Activated CD4-positive, alpha-beta T cell treated with anti-CD3 and anti-CD28 coated beads, Interleukin-2, amount 10 ng/mL, durations not matched to agents 24 days and 14 days (primary cell): ENCODE measurements at regions of chr1 and their contacts with region 1.

Region 1: GRCh38 chr1:91555821-91556531 is 55.3 kb downstream of the CDC7 start:
- DNase-seq: peak; percentile 93
- H3K4me3 Mint-ChIP-seq: peak overlapping the region; percentile 61
- H3K27ac Mint-ChIP-seq: peak overlapping the region; percentile 91
- H3K4me1 Mint-ChIP-seq: peaks cover 85% of the 10 kb centered on the region
- H3K27me3 Mint-ChIP-seq: no peaks in the 10 kb centered on the region

Region 2: DNA sequence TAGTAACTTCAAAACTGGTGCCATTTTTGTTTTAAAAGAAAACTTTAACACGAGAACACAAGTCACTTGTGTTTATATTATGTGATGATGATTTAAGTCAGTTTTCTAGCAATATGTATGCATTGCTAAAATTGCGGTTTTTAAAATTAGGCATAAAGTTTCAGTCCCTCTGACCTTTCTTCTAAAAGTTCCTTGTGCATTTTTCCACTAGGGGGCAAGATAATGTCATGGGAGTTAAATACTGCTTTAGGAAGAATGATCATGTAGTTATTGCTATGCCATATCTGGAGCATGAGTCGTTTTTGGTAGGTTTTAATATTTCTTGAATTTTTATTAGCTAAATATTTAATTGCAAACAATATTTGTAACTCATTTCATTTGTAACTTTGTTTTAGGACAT is 44.6 kb before region 1 on chr1:
- intact Hi-C with region 1: no loop called
- DNase-seq: peak; percentile 59
- H3K4me3 Mint-ChIP-seq: no peak overlapping the region
- H3K27ac Mint-ChIP-seq: no peak overlapping the region
- H3K4me1 Mint-ChIP-seq: peaks cover 23% of the 10 kb centered on the region
- H3K27me3 Mint-ChIP-seq: no peaks in the 10 kb centered on the region

Region 3: DNA sequence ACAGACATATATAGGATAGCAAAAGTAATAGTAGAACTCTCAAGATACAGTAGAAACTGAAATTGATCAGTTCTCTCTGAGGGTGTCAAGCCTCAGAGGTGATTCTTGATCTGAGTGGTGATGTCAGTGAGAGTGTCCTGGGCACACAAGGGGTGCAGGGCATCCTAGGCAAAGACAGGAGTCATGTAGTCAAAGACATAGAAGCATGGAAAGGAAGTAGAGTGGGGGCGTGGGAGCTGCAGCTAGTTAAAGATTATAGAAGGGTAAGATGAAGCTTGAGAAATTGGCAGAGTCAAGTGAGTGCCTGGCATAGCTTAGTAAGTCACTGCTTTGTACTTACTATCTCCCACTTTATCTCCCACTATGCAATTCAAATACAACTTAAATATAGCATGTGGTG is 32.5 kb before region 1 on chr1:
- intact Hi-C with region 1: loop called (anchors 1 kb)
- DNase-seq: peak; percentile 71
- H3K4me3 Mint-ChIP-seq: no peak overlapping the region
- H3K27ac Mint-ChIP-seq: peak overlapping the region; percentile 22
- H3K4me1 Mint-ChIP-seq: peaks cover 28% of the 10 kb centered on the region
- H3K27me3 Mint-ChIP-seq: no peaks in the 10 kb centered on the region

Region 4: DNA sequence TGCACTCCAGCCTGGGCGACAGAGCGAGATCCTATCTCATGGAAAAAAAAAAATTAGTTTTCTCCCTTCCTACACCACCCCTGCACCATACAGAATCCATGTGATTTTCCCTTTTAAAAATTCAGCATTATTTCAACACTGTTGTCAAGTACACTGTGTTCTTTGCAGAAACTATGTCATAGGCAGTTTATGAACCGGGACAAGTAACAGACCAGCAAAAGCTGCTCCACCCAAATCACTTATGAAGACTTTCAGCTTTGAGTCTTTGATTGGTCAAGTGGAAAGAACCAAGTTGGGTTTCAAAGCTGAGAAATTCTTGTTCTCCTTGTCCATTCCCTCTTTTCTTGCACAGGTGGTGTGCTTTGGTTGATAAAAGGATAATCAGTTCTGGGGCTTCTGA is 117.6 kb after region 1 on chr1:
- intact Hi-C with region 1: loop called (anchors 1 kb)
- DNase-seq: no peak
- H3K4me3 Mint-ChIP-seq: no peak overlapping the region
- H3K27ac Mint-ChIP-seq: peak overlapping the region; percentile 88
- H3K4me1 Mint-ChIP-seq: peaks cover 33% of the 10 kb centered on the region
- H3K27me3 Mint-ChIP-seq: no peaks in the 10 kb centered on the region

Region 5: GRCh38 chr1:91712981-91713841 is 157.2 kb after region 1 on chr1:
- intact Hi-C with region 1: loop called (anchors 1 kb)
- DNase-seq: peak; percentile 85
- H3K4me3 Mint-ChIP-seq: peak overlapping the region; percentile 55
- H3K27ac Mint-ChIP-seq: peak overlapping the region; percentile 88
- H3K4me1 Mint-ChIP-seq: peaks cover 35% of the 10 kb centered on the region
- H3K27me3 Mint-ChIP-seq: no peaks in the 10 kb centered on the region

Region 6: GRCh38 chr1:91803847-91804545 is 248.0 kb after region 1 on chr1:
- intact Hi-C with region 1: loop called (anchors 1 kb)
- DNase-seq: peak; percentile 91
- H3K4me3 Mint-ChIP-seq: peak overlapping the region; percentile 78
- H3K27ac Mint-ChIP-seq: peak overlapping the region; percentile 95
- H3K4me1 Mint-ChIP-seq: peaks cover 45% of the 10 kb centered on the region
- H3K27me3 Mint-ChIP-seq: peaks cover 12% of the 10 kb centered on the region

Region 7: DNA sequence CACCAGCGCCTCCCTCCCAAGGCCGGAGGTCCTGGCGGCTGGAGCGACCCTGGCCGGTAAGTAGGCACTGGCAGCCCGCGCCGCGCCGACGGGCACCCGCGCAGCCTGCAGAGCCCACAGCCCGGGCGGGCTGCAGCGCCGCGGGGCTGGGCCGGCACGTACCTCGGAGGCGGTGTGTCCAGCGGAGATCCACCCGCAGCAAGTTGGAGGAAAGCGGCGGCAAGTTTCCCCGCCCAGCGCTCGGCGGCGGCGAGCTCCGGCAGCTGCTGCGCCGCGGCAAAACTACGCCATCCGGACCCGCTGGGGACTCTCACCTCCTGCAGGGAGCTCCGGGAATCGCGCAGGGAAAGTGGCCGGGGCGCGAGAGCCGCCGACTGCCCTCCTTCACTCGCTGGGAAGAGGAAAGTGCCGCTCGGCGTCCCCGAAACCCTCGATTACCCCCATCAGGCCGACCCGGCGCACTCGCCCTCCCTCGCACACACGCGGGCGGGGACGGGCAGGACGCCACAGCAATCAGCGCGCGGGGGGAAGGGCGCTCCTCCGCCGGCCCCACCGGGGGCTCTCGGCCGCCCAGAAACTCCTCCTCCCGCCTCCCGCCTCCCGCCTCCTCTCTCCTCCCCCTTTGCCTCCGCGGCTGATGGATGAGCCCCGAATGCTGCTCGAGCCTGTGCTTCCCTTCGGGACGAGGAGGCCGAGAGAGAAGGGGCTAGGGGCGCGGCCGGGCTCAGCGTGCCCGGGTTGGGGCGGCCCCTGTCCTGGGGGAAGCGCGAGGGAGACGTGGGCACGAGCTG is 329.9 kb after region 1 on chr1 and contains the start of gene TGFBR3:
- intact Hi-C with region 1: loop called (anchors 2 kb)
- DNase-seq: peak; percentile 91
- H3K4me3 Mint-ChIP-seq: peak within 1 kb of the TSS; percentile 92
- H3K27ac Mint-ChIP-seq: peak within 1 kb of the TSS; percentile 59
- H3K4me1 Mint-ChIP-seq: peaks cover 32% of the 10 kb centered on the region
- H3K27me3 Mint-ChIP-seq: peaks cover 27% of the 10 kb centered on the region
- total RNA-seq, gene TGFBR3: 5.3 and 7.4 TPM in 2 replicates

Region 8: DNA sequence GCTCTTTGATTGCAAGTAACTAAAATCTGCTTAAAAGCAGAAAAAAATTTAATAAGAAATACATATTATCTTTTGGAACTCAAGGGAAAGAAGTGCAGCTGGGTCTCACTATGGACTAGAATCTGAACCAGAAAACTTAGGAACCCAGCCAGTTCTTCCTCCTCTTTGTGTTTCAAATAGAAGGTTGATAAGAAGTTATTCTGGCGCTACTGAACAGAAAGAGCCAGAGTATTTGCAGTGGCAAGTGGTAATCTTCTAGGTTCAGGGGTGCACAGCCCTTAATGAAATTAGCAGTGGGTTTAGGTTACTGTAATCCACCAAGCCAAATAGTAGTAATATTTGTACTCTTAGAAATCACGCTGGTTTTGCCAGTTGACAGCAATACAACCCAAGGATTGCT is 552.7 kb after region 1 on chr1:
- intact Hi-C with region 1: no loop called
- DNase-seq: no peak
- H3K4me3 Mint-ChIP-seq: no peak overlapping the region
- H3K27ac Mint-ChIP-seq: no peak overlapping the region
- H3K4me1 Mint-ChIP-seq: no peaks in the 10 kb centered on the region
- H3K27me3 Mint-ChIP-seq: no peaks in the 10 kb centered on the region

Region 9: GRCh38 chr1:92583821-92584760 is 1028.1 kb after region 1 on chr1:
- intact Hi-C with region 1: loop called (anchors 10 kb)
- DNase-seq: no peak
- H3K4me3 Mint-ChIP-seq: peak overlapping the region; percentile 74
- H3K27ac Mint-ChIP-seq: peak overlapping the region; percentile 92
- H3K4me1 Mint-ChIP-seq: peaks cover 50% of the 10 kb centered on the region
- H3K27me3 Mint-ChIP-seq: no peaks in the 10 kb centered on the region